Aorta (tissue), 5 donors: ENCODE measurements at regions of chr5 and their contacts with region 1.

Region 1: GRCh38 chr5:134527146-134527960 is 1.9 kb downstream of the JADE2 start:
- DNase-seq: peak; percentile 92 to 94
- ATAC-seq: peak; percentile 88
- H3K4me3 ChIP-seq: peak overlapping the region; percentile 86 to 94
- H3K27ac ChIP-seq: peak overlapping the region; percentile 1 to 77
- H3K4me1 ChIP-seq: peaks cover 3 to 7% of the 10 kb centered on the region in 2 donors
- H3K27me3 ChIP-seq: no peaks in the 10 kb centered on the region

Region 2: DNA sequence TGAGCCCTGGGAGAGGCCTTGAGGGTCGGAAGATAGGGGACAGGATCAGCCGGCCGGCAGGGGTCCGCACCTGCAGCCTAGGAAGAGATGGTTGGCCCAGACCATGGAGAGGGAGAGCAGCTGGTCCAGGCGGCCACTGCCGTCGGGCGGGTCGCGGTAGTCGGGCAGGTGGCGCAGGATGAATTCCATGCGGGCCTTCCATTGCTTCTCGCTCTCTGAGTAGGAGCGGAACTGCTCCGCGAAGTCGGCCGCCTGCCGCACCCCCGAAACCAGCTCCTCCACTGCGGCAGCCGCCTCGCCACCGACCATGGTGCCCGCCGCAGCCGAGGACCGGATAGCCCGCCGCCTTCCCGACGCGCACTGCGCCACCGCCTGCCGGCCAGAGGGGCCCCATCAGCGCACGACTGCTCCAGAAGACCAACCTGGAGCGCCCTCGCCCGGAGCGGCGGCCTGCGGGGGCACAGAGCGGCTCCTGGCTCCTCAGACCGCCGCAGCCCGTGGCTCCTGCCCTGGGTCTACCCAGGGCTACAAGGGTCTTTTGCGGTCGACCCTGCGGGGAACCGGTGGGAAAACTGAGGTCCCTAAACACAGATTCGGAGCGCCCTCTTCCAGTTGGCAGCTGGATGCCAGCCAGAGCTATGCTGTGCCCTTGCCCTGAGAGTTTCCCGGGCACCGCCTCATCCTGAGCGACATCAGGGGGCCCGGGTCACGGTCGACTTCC is 115.6 kb before region 1 on chr5 and contains the start of gene CDKN2AIPNL:
- intact Hi-C with region 1: loop called (anchors 2 to 5 kb)
- DNase-seq: peak; percentile 94 to 98
- ATAC-seq: peak; percentile 98
- H3K4me3 ChIP-seq: peak within 1 kb of the TSS; percentile 60 to 96
- H3K27ac ChIP-seq: peak within 1 kb of the TSS in 1 of 2 donors; percentile 4
- H3K4me1 ChIP-seq: no peaks in the 10 kb centered on the region
- H3K27me3 ChIP-seq: no peaks in the 10 kb centered on the region
- total RNA-seq, gene CDKN2AIPNL: 11.0 to 12.0 TPM

Region 3: DNA sequence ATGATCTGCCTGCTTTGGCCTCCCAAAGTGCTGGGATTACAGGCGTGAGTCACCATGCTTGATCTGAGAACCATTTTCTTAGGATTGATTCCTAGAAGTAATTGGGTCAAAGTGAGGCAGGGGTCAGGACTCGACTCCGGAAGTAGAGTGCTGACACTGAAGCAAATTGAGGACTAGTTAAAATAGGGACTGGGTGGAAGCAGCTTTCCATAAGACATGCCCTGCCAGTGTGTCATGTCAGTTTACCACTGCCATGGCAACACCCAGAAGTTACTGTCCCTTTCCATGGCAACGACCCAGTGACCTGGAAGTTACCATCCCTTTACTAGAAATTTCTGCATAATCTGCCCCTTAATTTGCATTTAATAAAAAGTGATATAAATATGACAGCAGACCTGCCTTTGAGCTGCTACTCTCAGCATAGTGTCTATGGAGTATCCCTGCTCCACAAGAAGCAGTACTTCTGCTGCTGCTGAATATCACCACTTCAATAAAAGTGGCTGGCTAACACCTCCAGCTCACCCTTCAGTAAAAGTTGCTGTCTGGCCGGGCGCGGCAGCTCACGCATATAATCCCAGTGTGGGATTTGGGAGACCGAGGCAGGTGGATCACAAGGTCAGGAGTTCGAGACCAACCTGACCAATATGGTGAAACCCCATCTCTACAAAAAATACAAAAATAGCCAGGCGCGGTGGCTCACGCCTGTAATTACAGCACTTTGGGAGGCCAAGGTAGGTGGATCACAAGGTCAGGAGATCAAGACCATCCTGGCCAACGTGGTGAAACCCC is 49.7 kb before region 1 on chr5:
- intact Hi-C with region 1: no loop called
- DNase-seq: peak in 1 of 2 donors; percentile 37
- ATAC-seq: no peak
- H3K4me3 ChIP-seq: no peak overlapping the region
- H3K27ac ChIP-seq: no peak overlapping the region
- H3K4me1 ChIP-seq: no peaks in the 10 kb centered on the region
- H3K27me3 ChIP-seq: no peaks in the 10 kb centered on the region

Region 4: GRCh38 chr5:134493461-134494055 is 33.8 kb before region 1 on chr5:
- intact Hi-C with region 1: no loop called
- DNase-seq: peak in 1 of 2 donors; percentile 36
- ATAC-seq: no peak
- H3K4me3 ChIP-seq: no peak overlapping the region
- H3K27ac ChIP-seq: no peak overlapping the region
- H3K4me1 ChIP-seq: no peaks in the 10 kb centered on the region
- H3K27me3 ChIP-seq: no peaks in the 10 kb centered on the region

Region 5: GRCh38 chr5:134692722-134693121 is 165.4 kb after region 1 on chr5:
- intact Hi-C with region 1: no loop called
- DNase-seq: no peak
- ATAC-seq: no peak
- H3K4me3 ChIP-seq: no peak overlapping the region
- H3K27ac ChIP-seq: no peak overlapping the region
- H3K4me1 ChIP-seq: no peaks in the 10 kb centered on the region
- H3K27me3 ChIP-seq: no peaks in the 10 kb centered on the region